ENCODE measurements at regions of chr4 and their contacts with region 1.

Region 1: GRCh38 chr4:53929955-53930798 is 134.2 kb downstream of the CHIC2 start:
- DNase-seq: peak; percentile 94
- ATAC-seq: peak; percentile 86
- H3K4me3 ChIP-seq: no peak overlapping the region
- H3K27ac ChIP-seq: peak overlapping the region; percentile 90
- H3K4me1 ChIP-seq: peaks cover 36% of the 10 kb centered on the region
- H3K27me3 ChIP-seq: no peaks in the 10 kb centered on the region
- CTCF ChIP-seq: peak; percentile 97

Region 2: GRCh38 chr4:53914313-53915016 is 15.7 kb before region 1 on chr4:
- CTCF ChIA-PET with region 1: interaction called, 12 read pairs
- POLR2A ChIA-PET with region 1: interaction called, 3 read pairs
- intact Hi-C with region 1: no loop called
- DNase-seq: peak; percentile 99
- ATAC-seq: peak; percentile 87
- H3K4me3 ChIP-seq: peak overlapping the region; percentile 4; the same call in 1 of the 2 replicates
- H3K27ac ChIP-seq: peak overlapping the region; percentile 88
- H3K4me1 ChIP-seq: peaks cover 50% of the 10 kb centered on the region
- H3K27me3 ChIP-seq: no peaks in the 10 kb centered on the region
- CTCF ChIP-seq: no peak

Region 3: DNA sequence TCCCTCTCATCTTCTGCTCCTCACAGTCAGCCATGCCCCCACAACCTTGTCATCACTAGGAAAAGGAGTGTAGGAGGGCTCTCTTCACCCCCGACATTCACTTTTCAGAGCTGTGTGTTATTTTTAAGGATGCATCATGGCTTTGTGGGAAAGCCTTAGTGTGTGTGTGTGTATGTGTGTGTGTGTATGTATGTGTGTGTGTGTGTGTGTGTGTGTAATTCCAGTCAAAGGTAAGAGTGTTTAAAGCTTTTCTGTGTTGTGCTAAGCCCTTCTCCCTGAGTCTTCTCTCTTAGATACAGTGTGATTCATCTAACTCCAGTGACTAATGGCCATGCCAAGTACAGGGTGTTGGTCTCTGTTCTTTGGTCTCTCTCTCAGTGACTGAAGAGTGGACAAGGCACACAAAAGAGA is 57.6 kb after region 1 on chr4:
- CTCF ChIA-PET with region 1: interaction called, 6 read pairs
- POLR2A ChIA-PET with region 1: no interaction called
- intact Hi-C with region 1: loop called (anchors 5 kb)
- DNase-seq: peak; percentile 70
- ATAC-seq: peak; percentile 94
- H3K4me3 ChIP-seq: no peak overlapping the region
- H3K27ac ChIP-seq: no peak overlapping the region
- H3K4me1 ChIP-seq: peaks cover 4% of the 10 kb centered on the region; the same call in 1 of the 2 replicates
- H3K27me3 ChIP-seq: no peaks in the 10 kb centered on the region
- CTCF ChIP-seq: no peak

Region 4: GRCh38 chr4:54082168-54082567 is 152.0 kb after region 1 on chr4:
- CTCF ChIA-PET with region 1: no interaction called
- POLR2A ChIA-PET with region 1: no interaction called
- intact Hi-C with region 1: loop called (anchors 1 kb)
- DNase-seq: peak; percentile 100
- ATAC-seq: peak; percentile 86
- H3K4me3 ChIP-seq: peak overlapping the region; percentile 24; the same call in 1 of the 2 replicates
- H3K27ac ChIP-seq: peak overlapping the region; percentile 67
- H3K4me1 ChIP-seq: peaks cover 55% of the 10 kb centered on the region
- H3K27me3 ChIP-seq: no peaks in the 10 kb centered on the region
- CTCF ChIP-seq: no peak

Region 5: GRCh38 chr4:54197926-54198325 is 267.7 kb after region 1 on chr4:
- CTCF ChIA-PET with region 1: no interaction called
- POLR2A ChIA-PET with region 1: no interaction called
- intact Hi-C with region 1: no loop called
- DNase-seq: no peak
- ATAC-seq: no peak
- H3K4me3 ChIP-seq: no peak overlapping the region
- H3K27ac ChIP-seq: no peak overlapping the region
- H3K4me1 ChIP-seq: no peaks in the 10 kb centered on the region
- H3K27me3 ChIP-seq: no peaks in the 10 kb centered on the region
- CTCF ChIP-seq: no peak

Region 6: GRCh38 chr4:54217642-54218495 is 287.7 kb after region 1 on chr4:
- CTCF ChIA-PET with region 1: interaction called, 12 read pairs
- POLR2A ChIA-PET with region 1: no interaction called
- intact Hi-C with region 1: loop called (anchors 1 kb)
- DNase-seq: peak; percentile 94
- ATAC-seq: peak; percentile 90
- H3K4me3 ChIP-seq: peak overlapping the region; percentile 70
- H3K27ac ChIP-seq: no peak overlapping the region
- H3K4me1 ChIP-seq: 0 out of 2 replicates have a peak, but pooled peaks cover 4% of the 10 kb centered on the region
- H3K27me3 ChIP-seq: no peaks in the 10 kb centered on the region
- CTCF ChIP-seq: peak; percentile 98

Region 7: GRCh38 chr4:54228056-54228527 is 297.9 kb after region 1 on chr4:
- CTCF ChIA-PET with region 1: interaction called, 18 read pairs
- POLR2A ChIA-PET with region 1: no interaction called
- intact Hi-C with region 1: loop called (anchors 1 kb)
- DNase-seq: peak; percentile 83
- ATAC-seq: peak; percentile 65
- H3K4me3 ChIP-seq: peak overlapping the region; percentile 76
- H3K27ac ChIP-seq: no peak overlapping the region
- H3K4me1 ChIP-seq: peaks cover 41% of the 10 kb centered on the region
- H3K27me3 ChIP-seq: peaks cover 40% of the 10 kb centered on the region
- CTCF ChIP-seq: peak; percentile 96